Mammary epithelial cell (primary cell): ENCODE measurements at regions of chr9 and their contacts with region 1.

Region 1: GRCh38 chr9:32940740-32941139 is 60.7 kb downstream of the APTX start:
- DNase-seq: peak; percentile 26
- H3K4me3 ChIP-seq: no peak overlapping the region
- H3K27ac ChIP-seq: no peak overlapping the region
- H3K4me1 ChIP-seq: peaks cover 3% of the 10 kb centered on the region
- H3K27me3 ChIP-seq: no peaks in the 10 kb centered on the region
- CTCF ChIP-seq: no peak

Region 2: DNA sequence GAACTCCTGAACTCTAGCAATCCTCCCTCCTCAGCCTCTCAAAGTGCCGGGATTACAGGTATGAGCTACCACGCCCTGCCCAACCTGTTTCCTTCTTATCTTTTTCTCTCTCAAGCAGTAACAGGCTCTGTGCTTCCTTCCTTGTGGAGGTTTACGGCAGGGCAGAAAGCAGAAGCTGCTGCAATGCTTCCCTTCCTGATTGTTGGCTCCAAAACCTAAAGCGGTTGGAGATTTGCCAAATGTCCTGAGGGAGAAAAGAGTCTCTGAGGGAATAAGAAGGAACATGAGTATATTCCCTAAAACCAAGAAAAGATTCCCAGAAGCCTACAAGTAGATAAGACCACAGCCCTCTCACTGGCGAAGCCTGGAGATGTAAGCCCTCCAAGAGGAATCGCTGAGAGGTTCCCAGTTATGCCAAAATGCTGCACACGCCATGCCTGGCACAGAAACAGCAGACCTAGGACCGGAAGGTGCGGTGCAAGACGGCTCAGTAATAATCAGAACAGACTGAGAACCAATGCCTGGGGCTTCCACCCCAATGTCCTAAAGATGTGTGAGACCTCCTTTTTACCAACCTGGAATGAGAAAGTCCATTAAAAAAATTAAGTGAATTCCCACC is 12.5 kb before region 1 on chr9:
- CTCF ChIA-PET with region 1: interaction called, 14 read pairs
- dilution Hi-C with region 1: no loop called
- in situ Hi-C with region 1: no loop called
- intact Hi-C with region 1: no loop called
- DNase-seq: peak; percentile 57
- H3K4me3 ChIP-seq: no peak overlapping the region
- H3K27ac ChIP-seq: no peak overlapping the region
- H3K4me1 ChIP-seq: peaks cover 11% of the 10 kb centered on the region
- H3K27me3 ChIP-seq: no peaks in the 10 kb centered on the region
- CTCF ChIP-seq: no peak

Region 3: DNA sequence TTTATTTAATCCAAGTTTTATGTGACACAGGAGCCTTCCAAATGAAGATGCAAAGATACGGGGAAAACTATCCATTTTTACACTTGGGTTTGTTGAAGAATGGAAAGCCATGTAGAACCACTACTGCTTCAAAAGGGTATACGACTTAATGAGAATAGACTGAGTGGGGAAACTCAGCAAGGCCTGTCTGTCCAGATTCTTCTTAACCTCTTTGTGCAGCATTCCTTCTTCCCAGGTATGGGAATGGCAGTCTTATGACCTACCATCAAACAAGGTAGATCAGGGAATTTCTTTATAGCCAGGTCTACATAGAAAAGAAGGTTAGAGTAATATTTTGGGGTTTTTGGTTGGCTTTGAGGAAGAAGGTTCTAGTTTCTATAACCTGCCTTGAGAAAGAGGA is 37.3 kb after region 1 on chr9:
- CTCF ChIA-PET with region 1: no interaction called
- dilution Hi-C with region 1: no loop called
- in situ Hi-C with region 1: no loop called
- intact Hi-C with region 1: no loop called
- DNase-seq: no peak
- H3K4me3 ChIP-seq: no peak overlapping the region
- H3K27ac ChIP-seq: no peak overlapping the region
- H3K4me1 ChIP-seq: no peaks in the 10 kb centered on the region
- H3K27me3 ChIP-seq: no peaks in the 10 kb centered on the region
- CTCF ChIP-seq: no peak

Region 4: GRCh38 chr9:33765411-33765810 is 824.7 kb after region 1 on chr9:
- CTCF ChIA-PET with region 1: no interaction called
- dilution Hi-C with region 1: no loop called
- in situ Hi-C with region 1: no loop called
- intact Hi-C with region 1: no loop called
- DNase-seq: peak; percentile 86
- H3K4me3 ChIP-seq: no peak overlapping the region
- H3K27ac ChIP-seq: peak overlapping the region; percentile 75
- H3K4me1 ChIP-seq: peaks cover 37% of the 10 kb centered on the region
- H3K27me3 ChIP-seq: no peaks in the 10 kb centered on the region
- CTCF ChIP-seq: no peak